ENCODE measurements at regions of chr4 and their contacts with region 1.

Region 1: GRCh38 chr4:108148316-108148715 is 20.4 kb downstream of the LEF1 start:
- DNase-seq: no peak
- H3K4me3 Mint-ChIP-seq: peak overlapping the region; percentile 17
- H3K27ac Mint-ChIP-seq: peak overlapping the region; percentile 67
- H3K4me1 Mint-ChIP-seq: peaks cover 90% of the 10 kb centered on the region
- H3K27me3 Mint-ChIP-seq: no peaks in the 10 kb centered on the region

Region 2: GRCh38 chr4:107824353-107825071 is 323.8 kb before region 1 on chr4 and contains the start of gene SGMS2:
- intact Hi-C with region 1: no loop called
- DNase-seq: no peak
- H3K4me3 Mint-ChIP-seq: peak within 1 kb of the TSS; percentile 85
- H3K27ac Mint-ChIP-seq: peak within 1 kb of the TSS; percentile 70
- H3K4me1 Mint-ChIP-seq: peaks cover 9% of the 10 kb centered on the region
- H3K27me3 Mint-ChIP-seq: peaks cover 55% of the 10 kb centered on the region
- total RNA-seq, gene SGMS2: 0.64 and 1.1 TPM in 2 replicates

Region 3: GRCh38 chr4:108135549-108136209 is 12.6 kb before region 1 on chr4:
- intact Hi-C with region 1: loop called (anchors 1 kb)
- DNase-seq: no peak
- H3K4me3 Mint-ChIP-seq: peak overlapping the region; percentile 56
- H3K27ac Mint-ChIP-seq: peak overlapping the region; percentile 87
- H3K4me1 Mint-ChIP-seq: peaks cover 75% of the 10 kb centered on the region
- H3K27me3 Mint-ChIP-seq: no peaks in the 10 kb centered on the region

Region 4: DNA sequence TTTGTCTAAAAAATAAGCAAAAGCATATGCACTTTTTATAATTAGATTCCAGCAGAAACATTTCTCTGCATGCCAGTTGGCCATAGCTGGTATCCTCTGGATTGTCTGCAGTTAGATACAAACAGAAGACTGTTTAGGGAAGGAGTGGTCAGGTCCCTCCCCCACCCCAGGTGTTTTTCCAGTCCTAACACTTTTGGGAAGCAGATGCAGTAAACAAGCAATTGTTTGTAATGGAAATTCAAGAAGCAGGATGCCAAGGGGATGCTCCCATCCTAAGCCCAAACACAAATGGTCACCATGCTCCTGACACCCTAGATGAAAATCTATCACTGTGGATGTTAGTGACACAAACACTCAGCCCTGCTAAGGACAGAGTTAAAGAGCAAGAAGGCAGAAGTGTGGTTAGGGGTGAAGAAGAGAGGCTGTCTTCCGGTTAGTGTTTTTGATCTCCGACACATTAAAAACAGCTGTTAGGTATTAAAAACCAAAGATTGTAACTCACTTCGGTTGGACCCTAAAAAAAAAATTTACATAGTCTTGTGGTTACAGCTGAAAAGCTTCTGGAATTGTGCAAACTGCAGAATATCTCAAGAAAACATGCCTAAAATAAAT is 12.5 kb after region 1 on chr4:
- intact Hi-C with region 1: loop called (anchors 1 kb)
- DNase-seq: no peak
- H3K4me3 Mint-ChIP-seq: peak overlapping the region; percentile 84
- H3K27ac Mint-ChIP-seq: peak overlapping the region; percentile 72
- H3K4me1 Mint-ChIP-seq: peaks cover 94% of the 10 kb centered on the region
- H3K27me3 Mint-ChIP-seq: no peaks in the 10 kb centered on the region

Measured in activated T-helper 1 cell treated with anti-CD3 and anti-CD28 coated beads, Interleukin-12 subunit alpha, Interleukin-12 subunit beta, Interleukin-2, Interleukin-4 antibody, amounts not matched to agents 30 ng/mL and 10 ng/mL and 1 ng/mL, durations not matched to agents 14 hours and 24 hours and 36 hours (primary cell).